ENCODE measurements at regions of chrX and their contacts with region 1.

Region 1: GRCh38 chrX:101803451-101803850 is 128.4 kb downstream of the ZMAT1 start:
- DNase-seq: no peak
- H3K4me3 ChIP-seq: no peak overlapping the region
- H3K27ac ChIP-seq: no peak overlapping the region
- H3K4me1 ChIP-seq: no peaks in the 10 kb centered on the region
- H3K27me3 ChIP-seq: no peaks in the 10 kb centered on the region
- CTCF ChIP-seq: peak in 3 of 6 experiments; percentile 42 to 59 (median 57)
- POLR2A ChIP-seq: no peak

Region 2: DNA sequence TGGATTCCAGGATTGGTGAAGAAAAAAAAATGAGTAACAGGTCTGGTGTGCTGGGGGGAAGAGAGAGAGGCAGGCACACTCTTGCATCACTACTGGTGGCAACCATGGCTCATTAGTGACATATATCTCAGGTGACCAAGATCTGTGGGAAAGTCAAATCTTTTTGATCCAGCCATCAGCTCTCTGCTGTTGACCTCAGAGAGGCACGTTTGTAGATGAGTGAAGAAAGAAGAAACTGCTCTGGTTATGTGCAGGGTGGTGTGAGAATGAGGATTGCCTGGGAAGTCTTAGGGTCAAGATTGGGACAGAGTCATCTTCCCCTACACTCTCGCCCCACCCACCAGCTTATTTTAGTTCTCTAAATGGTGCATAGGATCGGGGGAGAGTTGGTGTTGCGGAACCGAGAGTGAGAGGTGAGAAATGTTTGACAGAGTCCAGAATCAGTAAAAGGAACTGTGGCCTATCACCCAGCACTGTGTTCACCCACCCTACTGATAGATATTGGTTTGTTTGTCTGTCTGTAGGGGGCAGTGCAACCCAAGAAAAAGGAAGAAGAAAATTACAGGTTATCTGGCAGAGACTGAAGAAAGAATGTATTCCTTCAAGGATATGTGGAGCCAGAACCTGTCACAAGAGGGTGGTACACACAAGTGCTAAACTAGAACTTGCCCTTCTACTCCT is 207.6 kb before region 1 on chrX:
- intact Hi-C with region 1: loop called (anchors 5 kb)
- DNase-seq: peak; percentile 23 to 29
- H3K4me3 ChIP-seq: no peak overlapping the region
- H3K27ac ChIP-seq: no peak overlapping the region
- H3K4me1 ChIP-seq: no peaks in the 10 kb centered on the region
- H3K27me3 ChIP-seq: no peaks in the 10 kb centered on the region
- CTCF ChIP-seq: peak; percentile 21 to 91 (median 68)
- POLR2A ChIP-seq: no peak

Region 3: DNA sequence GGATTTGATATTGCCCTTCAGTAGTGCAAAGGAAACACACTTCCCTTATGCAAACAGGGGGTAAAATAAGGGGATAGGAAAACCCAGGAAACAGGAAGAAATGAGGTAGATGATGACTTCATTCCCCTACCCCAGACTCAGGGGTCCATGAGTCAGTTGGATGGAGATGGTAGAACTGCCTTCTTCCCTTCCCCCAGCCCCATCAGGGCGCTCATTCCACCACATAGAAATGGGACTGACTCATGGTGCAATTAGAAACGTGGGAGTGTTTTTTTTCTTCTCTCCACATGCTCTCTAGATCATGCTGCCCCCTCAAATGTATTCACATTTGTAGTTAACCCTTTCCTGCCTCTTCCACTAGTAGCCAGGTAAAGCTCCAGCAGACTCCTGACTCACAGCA is 120.7 kb before region 1 on chrX:
- intact Hi-C with region 1: no loop called
- DNase-seq: no peak
- H3K4me3 ChIP-seq: no peak overlapping the region
- H3K27ac ChIP-seq: no peak overlapping the region
- H3K4me1 ChIP-seq: peaks cover 0 to 3% of the 10 kb centered on the region in 2 donors
- H3K27me3 ChIP-seq: no peaks in the 10 kb centered on the region
- CTCF ChIP-seq: no peak
- POLR2A ChIP-seq: no peak

Measured in thyroid gland (tissue), 4 donors.